Calu3 (cell line): ENCODE measurements at regions of chr3 and their contacts with region 1.

Region 1: DNA sequence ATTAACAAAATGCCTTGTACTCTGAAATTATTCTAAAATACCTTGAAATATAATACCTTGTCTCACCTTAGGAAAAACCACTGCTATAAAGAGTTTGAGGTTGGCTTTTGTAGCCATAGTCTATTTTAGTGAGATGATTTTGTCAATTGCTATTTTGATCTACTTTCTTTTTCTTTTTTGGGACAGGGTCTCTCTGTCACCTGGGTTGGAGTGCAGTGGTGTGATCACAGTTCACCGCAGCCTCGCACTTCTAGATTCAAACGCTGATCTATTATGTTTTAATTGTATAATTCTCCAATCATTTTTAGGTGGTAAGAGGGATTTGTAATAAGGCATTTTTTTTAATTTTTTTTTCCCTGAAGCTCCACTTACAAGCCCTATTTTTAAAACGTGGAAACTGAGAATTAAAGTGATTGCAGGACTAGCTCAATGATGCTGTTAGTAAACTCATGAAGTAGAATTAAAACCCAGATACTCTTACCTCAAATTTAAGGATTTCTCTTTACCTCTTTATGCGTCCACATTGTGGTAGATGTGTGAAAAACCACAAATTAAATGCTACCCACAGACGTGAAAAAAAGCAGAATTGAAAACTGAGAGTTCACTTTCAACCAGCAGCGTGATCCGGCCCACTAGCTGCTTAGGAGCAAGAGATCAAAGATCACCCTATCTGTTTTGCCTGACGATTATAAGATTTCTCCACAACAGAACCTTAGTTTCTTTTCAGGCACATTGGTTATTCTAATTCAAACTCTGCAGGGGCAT is 384.2 kb downstream of the CGGBP1 start:
- DNase-seq: no peak
- H3K4me3 Mint-ChIP-seq: no peak overlapping the region
- H3K27ac Mint-ChIP-seq: no peak overlapping the region
- H3K4me1 Mint-ChIP-seq: no peaks in the 10 kb centered on the region
- H3K27me3 Mint-ChIP-seq: no peaks in the 10 kb centered on the region
- CTCF ChIP-seq: no peak

Region 2: DNA sequence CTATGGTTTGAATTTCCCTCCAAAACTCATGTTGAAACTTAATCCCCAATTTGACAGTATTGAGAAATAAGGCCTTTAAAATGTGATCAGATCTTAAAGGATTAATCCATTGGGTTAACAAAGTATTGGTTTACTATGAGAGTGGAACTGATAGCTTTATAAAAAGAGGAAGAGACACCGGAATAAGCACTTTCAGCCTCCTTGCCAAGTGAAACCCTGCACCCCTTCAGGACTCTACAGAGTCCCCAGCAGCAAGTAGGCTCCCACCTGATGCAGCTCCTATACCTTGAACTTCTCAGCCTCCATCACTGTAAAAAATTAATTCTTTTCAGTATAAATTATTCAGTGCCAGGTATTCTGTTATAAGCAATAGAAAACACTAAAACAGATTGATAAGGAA is 35.9 kb after region 1 on chr3:
- CTCF ChIA-PET with region 1: no interaction called
- intact Hi-C with region 1: loop called (anchors 5 kb)
- DNase-seq: no peak
- H3K4me3 Mint-ChIP-seq: no peak overlapping the region
- H3K27ac Mint-ChIP-seq: no peak overlapping the region
- H3K4me1 Mint-ChIP-seq: no peaks in the 10 kb centered on the region
- H3K27me3 Mint-ChIP-seq: no peaks in the 10 kb centered on the region
- CTCF ChIP-seq: no peak

Region 3: DNA sequence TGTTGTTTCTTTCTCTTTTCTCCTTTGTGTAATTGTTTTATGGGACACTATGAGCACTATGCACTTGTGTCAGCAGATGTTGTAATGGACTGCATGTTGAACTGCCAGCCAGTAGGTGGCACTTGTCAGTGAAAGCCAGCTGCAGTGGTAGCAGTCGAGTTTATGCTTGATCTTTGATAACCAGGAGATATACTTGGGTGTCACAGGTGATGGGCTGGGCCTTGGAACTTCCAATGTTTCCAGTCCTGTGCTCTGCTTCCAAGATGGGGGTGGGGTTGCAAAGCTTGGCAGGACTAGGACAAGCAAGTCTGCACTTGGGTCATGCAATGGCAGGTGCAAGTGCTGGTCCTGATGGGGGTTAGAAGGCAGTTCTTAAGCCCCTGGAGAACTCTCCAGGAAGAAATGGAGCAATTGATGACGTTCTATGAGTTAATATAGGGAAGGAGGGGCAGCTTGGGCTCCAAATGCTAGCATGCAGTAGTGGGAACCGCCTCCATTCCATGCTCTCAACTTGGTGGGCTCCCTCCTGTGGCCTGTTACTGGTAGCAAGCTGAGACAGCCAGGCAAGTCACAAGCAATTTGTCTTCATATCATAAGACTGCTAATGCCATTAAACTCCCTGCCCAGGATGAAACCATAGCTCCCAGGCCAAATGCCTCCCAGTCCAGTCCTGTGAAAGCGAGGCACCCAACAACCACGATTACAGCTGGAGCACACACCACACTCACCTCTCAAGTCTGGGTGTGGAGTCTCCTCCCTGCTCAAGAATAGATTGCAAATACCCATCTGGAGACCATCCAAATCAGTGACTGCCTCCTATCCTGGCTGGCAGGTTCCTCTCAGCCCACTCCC is 97.0 kb after region 1 on chr3:
- CTCF ChIA-PET with region 1: no interaction called
- intact Hi-C with region 1: no loop called
- DNase-seq: peak; percentile 35
- H3K4me3 Mint-ChIP-seq: no peak overlapping the region
- H3K27ac Mint-ChIP-seq: no peak overlapping the region
- H3K4me1 Mint-ChIP-seq: no peaks in the 10 kb centered on the region
- H3K27me3 Mint-ChIP-seq: no peaks in the 10 kb centered on the region
- CTCF ChIP-seq: peak; percentile 60